ENCODE measurements at regions of chr18 and their contacts with region 1.

Region 1: DNA sequence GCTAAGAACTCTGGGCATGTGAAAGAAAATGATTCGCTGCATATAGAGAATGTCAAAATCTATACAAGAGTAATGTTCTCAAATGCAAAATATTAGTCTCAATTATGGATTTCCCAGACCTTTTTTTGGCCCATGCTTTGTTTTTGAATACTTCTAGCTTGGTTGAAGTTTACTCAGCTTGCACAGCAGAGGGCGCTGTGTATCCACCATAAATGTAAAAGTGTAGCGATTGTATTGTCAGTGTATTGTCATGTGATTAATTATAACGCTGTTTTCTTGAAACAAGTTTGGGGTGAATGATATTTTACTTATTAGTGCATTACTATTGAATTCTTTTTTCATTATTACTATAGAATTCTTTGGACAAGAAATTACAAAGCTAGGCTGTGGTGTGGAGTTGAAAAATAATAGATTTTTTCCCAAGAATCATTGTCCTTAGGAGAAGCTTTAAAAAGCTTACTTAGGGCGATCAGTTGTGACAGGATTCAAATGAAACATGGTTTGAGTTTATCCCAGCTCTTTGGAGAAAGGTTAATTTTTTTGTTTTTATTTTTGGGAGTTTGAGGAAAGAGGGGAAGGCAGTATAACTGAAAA is 98.3 kb downstream of the PIK3C3 start:
- DNase-seq: peak; percentile 59
- ATAC-seq: peak; percentile 62
- H3K4me3 ChIP-seq: no peak overlapping the region
- H3K4me3 Mint-ChIP-seq: no peak overlapping the region
- H3K27ac ChIP-seq: no peak overlapping the region
- H3K27ac Mint-ChIP-seq: no peak overlapping the region
- H3K4me1 ChIP-seq: no peaks in the 10 kb centered on the region
- H3K4me1 Mint-ChIP-seq: peaks cover 7% of the 10 kb centered on the region
- H3K27me3 ChIP-seq: no peaks in the 10 kb centered on the region
- H3K27me3 Mint-ChIP-seq: no peaks in the 10 kb centered on the region
- CTCF ChIP-seq: peak; percentile 99

Region 2: DNA sequence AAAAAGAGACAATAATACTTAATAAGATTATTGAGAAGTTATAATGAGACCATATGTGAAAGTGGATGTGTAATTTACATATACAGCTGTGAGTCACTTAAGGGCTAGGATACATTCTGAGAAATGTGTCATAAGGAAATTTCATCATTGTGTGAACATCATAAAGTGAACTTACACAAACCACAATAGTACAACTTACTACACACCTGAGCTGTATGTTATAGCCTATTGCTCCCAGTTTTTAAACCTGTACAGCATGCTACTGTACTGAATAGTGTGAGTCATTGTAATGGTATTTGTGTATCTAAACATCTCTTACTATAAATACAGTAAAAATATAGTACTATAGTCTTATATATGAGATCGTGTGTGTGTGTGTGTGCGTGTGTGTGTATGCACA is 1518.6 kb before region 1 on chr18:
- CTCF ChIA-PET with region 1: no interaction called
- POLR2A ChIA-PET with region 1: no interaction called
- intact Hi-C with region 1: no loop called
- DNase-seq: no peak
- ATAC-seq: no peak
- H3K4me3 ChIP-seq: no peak overlapping the region
- H3K4me3 Mint-ChIP-seq: no peak overlapping the region
- H3K27ac ChIP-seq: no peak overlapping the region
- H3K27ac Mint-ChIP-seq: no peak overlapping the region
- H3K4me1 ChIP-seq: no peaks in the 10 kb centered on the region
- H3K4me1 Mint-ChIP-seq: no peaks in the 10 kb centered on the region
- H3K27me3 ChIP-seq: no peaks in the 10 kb centered on the region
- H3K27me3 Mint-ChIP-seq: no peaks in the 10 kb centered on the region
- CTCF ChIP-seq: no peak

Region 3: DNA sequence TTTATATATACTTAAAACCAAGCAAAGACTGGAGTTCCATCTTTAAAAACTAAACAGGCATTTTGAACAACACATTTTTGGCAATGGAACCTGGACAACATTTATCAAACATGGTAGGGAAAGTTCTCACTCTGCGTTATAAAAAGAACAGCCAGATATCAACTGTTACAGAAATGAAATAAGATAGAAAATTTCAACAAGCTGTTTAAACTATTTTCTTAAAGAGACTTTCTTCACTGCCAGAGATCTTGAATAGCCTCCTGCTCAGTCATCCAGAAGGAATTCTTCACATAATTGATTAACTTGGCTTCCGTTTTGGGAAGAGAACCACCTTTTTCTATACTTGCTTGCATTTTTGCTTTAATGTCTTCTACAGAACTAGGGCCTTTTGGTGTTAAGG is 264.3 kb before region 1 on chr18:
- CTCF ChIA-PET with region 1: no interaction called
- POLR2A ChIA-PET with region 1: no interaction called
- intact Hi-C with region 1: no loop called
- DNase-seq: no peak
- ATAC-seq: no peak
- H3K4me3 ChIP-seq: no peak overlapping the region
- H3K4me3 Mint-ChIP-seq: no peak overlapping the region
- H3K27ac ChIP-seq: no peak overlapping the region
- H3K27ac Mint-ChIP-seq: no peak overlapping the region
- H3K4me1 ChIP-seq: no peaks in the 10 kb centered on the region
- H3K4me1 Mint-ChIP-seq: no peaks in the 10 kb centered on the region
- H3K27me3 ChIP-seq: no peaks in the 10 kb centered on the region
- H3K27me3 Mint-ChIP-seq: no peaks in the 10 kb centered on the region
- CTCF ChIP-seq: no peak

Region 4: GRCh38 chr18:42028247-42028832 is 24.9 kb before region 1 on chr18:
- CTCF ChIA-PET with region 1: interaction called, 10 read pairs
- POLR2A ChIA-PET with region 1: no interaction called
- intact Hi-C with region 1: no loop called
- DNase-seq: peak; percentile 24
- ATAC-seq: peak; percentile 33
- H3K4me3 ChIP-seq: no peak overlapping the region
- H3K4me3 Mint-ChIP-seq: no peak overlapping the region
- H3K27ac ChIP-seq: no peak overlapping the region
- H3K27ac Mint-ChIP-seq: no peak overlapping the region
- H3K4me1 ChIP-seq: no peaks in the 10 kb centered on the region
- H3K4me1 Mint-ChIP-seq: no peaks in the 10 kb centered on the region
- H3K27me3 ChIP-seq: no peaks in the 10 kb centered on the region
- H3K27me3 Mint-ChIP-seq: no peaks in the 10 kb centered on the region
- CTCF ChIP-seq: peak; percentile 95

Region 5: DNA sequence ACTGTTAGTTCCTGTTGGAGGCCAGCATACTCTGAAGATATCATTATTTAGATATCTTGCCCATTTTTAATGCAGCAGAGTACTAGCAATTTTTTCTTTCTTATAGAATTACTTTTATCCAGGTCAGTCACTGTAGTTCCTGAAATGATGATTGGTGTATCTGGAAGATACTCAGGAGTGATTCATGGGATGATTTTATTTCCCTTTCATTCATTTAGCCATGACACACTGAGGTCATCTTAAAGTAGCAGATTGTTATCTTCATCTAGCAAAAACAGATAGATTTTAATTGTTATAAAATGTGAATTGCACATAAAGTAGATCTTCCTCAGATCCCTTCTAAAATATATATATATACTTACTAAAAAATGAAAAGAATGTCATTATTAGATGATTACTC is 10.8 kb after region 1 on chr18:
- CTCF ChIA-PET with region 1: interaction called, 14 read pairs
- POLR2A ChIA-PET with region 1: no interaction called
- intact Hi-C with region 1: no loop called
- DNase-seq: no peak
- ATAC-seq: no peak
- H3K4me3 ChIP-seq: no peak overlapping the region
- H3K4me3 Mint-ChIP-seq: no peak overlapping the region
- H3K27ac ChIP-seq: no peak overlapping the region
- H3K27ac Mint-ChIP-seq: no peak overlapping the region
- H3K4me1 ChIP-seq: no peaks in the 10 kb centered on the region
- H3K4me1 Mint-ChIP-seq: no peaks in the 10 kb centered on the region
- H3K27me3 ChIP-seq: no peaks in the 10 kb centered on the region
- H3K27me3 Mint-ChIP-seq: no peaks in the 10 kb centered on the region
- CTCF ChIP-seq: no peak